B cell (primary cell): ENCODE measurements at regions of chrX and their contacts with region 1.

Region 1: GRCh38 chrX:136147315-136147901 is at the start of gene FHL1:
- DNase-seq: peak; percentile 52
- ATAC-seq: peak; percentile 83
- H3K4me3 ChIP-seq: peak within 1 kb of the TSS; percentile 16 to 66 (median 56)
- H3K4me3 Mint-ChIP-seq: peak within 1 kb of the TSS; percentile 85
- H3K27ac ChIP-seq: no peak within 1 kb of the TSS
- H3K27ac Mint-ChIP-seq: peak within 1 kb of the TSS; percentile 59
- H3K4me1 ChIP-seq: peaks cover 17 to 18% of the 10 kb centered on the region in 2 donors
- H3K4me1 Mint-ChIP-seq: peaks cover 26% of the 10 kb centered on the region
- H3K27me3 ChIP-seq: peaks cover 0 to 6% (median 0%) of the 10 kb centered on the region in 4 experiments
- H3K27me3 Mint-ChIP-seq: no peaks in the 10 kb centered on the region
- CTCF ChIP-seq: no peak
- total RNA-seq, gene FHL1: 5.6 and 8.0 TPM in 2 replicates

Region 2: GRCh38 chrX:135985141-135985972 is 162.1 kb before region 1 on chrX and contains the start of gene SLC9A6:
- CTCF ChIA-PET with region 1: no interaction called
- POLR2A ChIA-PET with region 1: no interaction called
- intact Hi-C with region 1: loop called (anchors 5 kb)
- DNase-seq: peak; percentile 76
- ATAC-seq: peak; percentile 93
- H3K4me3 ChIP-seq: peak within 1 kb of the TSS; percentile 65 to 81 (median 77)
- H3K4me3 Mint-ChIP-seq: peak within 1 kb of the TSS; percentile 91
- H3K27ac ChIP-seq: peak within 1 kb of the TSS; percentile 62 to 77
- H3K27ac Mint-ChIP-seq: peak within 1 kb of the TSS; percentile 91
- H3K4me1 ChIP-seq: peaks cover 23 to 33% of the 10 kb centered on the region in 2 donors
- H3K4me1 Mint-ChIP-seq: peaks cover 43% of the 10 kb centered on the region
- H3K27me3 ChIP-seq: no peaks in the 10 kb centered on the region
- H3K27me3 Mint-ChIP-seq: no peaks in the 10 kb centered on the region
- CTCF ChIP-seq: no peak
- total RNA-seq, gene SLC9A6: 14.5 and 15.2 TPM in 2 replicates